ENCODE measurements at regions of chr22 and their contacts with region 1.

Region 1: DNA sequence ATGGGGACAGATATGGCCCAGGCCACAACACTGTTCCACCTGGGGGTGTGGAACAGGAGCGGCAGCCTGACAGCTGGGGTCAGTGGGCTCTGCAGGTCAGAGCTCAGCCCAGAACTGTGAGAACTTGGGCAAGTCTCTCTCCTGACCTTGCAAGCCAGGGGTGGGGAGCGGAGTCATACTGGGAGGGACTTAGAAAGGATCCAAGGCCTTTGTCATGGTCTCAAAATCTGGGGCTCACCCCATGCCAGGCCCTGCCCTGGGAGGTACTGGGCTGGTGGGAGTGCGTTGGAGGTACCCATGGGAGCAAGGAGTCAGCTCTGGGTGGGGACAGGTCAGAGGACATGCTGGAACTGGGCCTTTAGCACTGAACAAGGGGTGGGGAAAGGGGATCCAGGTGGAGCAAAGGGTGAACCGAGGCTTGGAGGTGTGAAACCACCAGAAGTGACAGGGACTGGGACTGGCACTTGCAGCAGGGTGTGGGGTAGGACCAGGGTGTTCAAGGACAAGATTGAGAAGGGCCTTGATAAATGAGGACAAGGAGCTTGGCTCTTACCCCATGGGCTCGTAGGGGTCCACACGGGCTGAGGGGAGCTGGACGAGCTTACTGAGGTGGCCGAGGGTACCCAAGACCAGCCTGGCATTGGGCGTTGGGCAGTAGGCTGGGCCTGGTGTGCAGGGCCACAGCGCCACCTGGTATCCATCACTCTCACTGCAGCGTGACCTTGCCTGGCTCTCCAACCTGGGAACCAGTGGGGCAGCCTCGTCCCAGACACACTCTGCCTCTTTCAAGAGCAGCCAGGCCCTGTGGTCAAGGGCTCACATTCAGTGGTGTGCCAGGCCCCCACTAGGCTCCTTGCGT is 7.4 kb upstream of the PMM1 start:
- DNase-seq: no peak
- H3K4me3 ChIP-seq: no peak overlapping the region
- H3K27me3 ChIP-seq: no peaks in the 10 kb centered on the region
- CTCF ChIP-seq: peak; percentile 82

Region 2: GRCh38 chr22:41367039-41367679 is 229.8 kb before region 1 on chr22:
- CTCF ChIA-PET with region 1: no interaction called
- POLR2A ChIA-PET with region 1: no interaction called
- DNase-seq: peak; percentile 71
- H3K4me3 ChIP-seq: peak overlapping the region; percentile 19
- H3K27me3 ChIP-seq: no peaks in the 10 kb centered on the region
- CTCF ChIP-seq: peak; percentile 57

Region 3: GRCh38 chr22:41403532-41404318 is 193.3 kb before region 1 on chr22:
- CTCF ChIA-PET with region 1: interaction called, 11 read pairs
- POLR2A ChIA-PET with region 1: no interaction called
- DNase-seq: no peak
- H3K4me3 ChIP-seq: no peak overlapping the region
- H3K27me3 ChIP-seq: no peaks in the 10 kb centered on the region
- CTCF ChIP-seq: peak; percentile 98

Region 4: DNA sequence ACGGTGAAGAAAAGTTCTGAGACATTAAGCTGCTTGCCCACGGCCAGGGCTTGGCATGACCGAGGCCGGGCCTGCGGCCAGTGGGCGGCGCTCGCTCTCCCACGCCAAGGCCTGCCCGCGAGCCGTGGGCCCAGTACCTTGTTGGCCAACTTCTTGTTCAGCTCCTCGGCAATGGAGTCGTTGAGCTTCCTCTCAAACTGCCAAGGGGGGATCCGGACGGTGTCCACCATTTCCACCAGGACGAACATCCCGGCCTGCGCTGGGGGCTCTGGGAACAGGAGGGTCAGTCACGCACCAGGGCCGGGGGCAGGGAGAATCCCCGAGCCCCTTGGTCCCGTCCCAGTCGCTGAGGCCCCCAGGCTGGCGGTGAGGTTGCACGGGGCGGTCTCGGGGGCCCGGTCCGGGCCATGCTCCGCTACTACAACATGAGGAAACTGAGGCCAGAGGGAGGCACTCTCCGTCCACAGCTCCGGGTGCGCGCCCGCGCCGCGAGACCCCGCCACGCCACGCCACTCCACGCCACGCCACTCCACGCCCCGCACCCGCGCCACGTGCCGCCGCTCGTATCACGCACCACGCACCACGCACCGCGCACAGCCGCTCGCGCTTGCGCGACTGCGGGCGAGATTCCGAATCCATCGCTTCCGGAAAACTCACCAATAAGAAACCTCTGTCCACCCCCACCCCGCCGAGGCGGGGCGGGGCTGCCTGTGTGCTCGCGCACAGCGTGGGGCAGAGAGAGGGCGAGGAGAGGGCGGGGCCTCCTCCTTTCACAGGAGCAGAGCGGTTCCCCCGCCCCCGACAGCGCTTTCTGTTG is 52.9 kb before region 1 on chr22 and contains the start of gene POLR3H:
- CTCF ChIA-PET with region 1: interaction called, 55 read pairs
- POLR2A ChIA-PET with region 1: no interaction called
- DNase-seq: peak; percentile 91
- H3K4me3 ChIP-seq: peak within 1 kb of the TSS; percentile 90
- H3K27me3 ChIP-seq: no peaks in the 10 kb centered on the region
- CTCF ChIP-seq: peak; percentile 75
- polyA plus RNA-seq, gene POLR3H: 39.4 and 52.5 TPM in 2 replicates

Region 5: GRCh38 chr22:41563051-41563711 is 33.8 kb before region 1 on chr22:
- CTCF ChIA-PET with region 1: interaction called, 20 read pairs
- POLR2A ChIA-PET with region 1: no interaction called
- DNase-seq: peak; percentile 70
- H3K4me3 ChIP-seq: peak overlapping the region; percentile 19
- H3K27me3 ChIP-seq: no peaks in the 10 kb centered on the region
- CTCF ChIP-seq: no peak

Region 6: GRCh38 chr22:41613456-41613855 is 16.5 kb after region 1 on chr22:
- CTCF ChIA-PET with region 1: interaction called, 17 read pairs
- POLR2A ChIA-PET with region 1: no interaction called
- DNase-seq: no peak
- H3K4me3 ChIP-seq: no peak overlapping the region
- H3K27me3 ChIP-seq: no peaks in the 10 kb centered on the region
- CTCF ChIP-seq: no peak

Measured in BJ (cell line).